Activated B cell treated with CpG ODN at 0.5 μM for 24 hours (primary cell): ENCODE measurements at regions of chr17 and their contacts with region 1.

Region 1: DNA sequence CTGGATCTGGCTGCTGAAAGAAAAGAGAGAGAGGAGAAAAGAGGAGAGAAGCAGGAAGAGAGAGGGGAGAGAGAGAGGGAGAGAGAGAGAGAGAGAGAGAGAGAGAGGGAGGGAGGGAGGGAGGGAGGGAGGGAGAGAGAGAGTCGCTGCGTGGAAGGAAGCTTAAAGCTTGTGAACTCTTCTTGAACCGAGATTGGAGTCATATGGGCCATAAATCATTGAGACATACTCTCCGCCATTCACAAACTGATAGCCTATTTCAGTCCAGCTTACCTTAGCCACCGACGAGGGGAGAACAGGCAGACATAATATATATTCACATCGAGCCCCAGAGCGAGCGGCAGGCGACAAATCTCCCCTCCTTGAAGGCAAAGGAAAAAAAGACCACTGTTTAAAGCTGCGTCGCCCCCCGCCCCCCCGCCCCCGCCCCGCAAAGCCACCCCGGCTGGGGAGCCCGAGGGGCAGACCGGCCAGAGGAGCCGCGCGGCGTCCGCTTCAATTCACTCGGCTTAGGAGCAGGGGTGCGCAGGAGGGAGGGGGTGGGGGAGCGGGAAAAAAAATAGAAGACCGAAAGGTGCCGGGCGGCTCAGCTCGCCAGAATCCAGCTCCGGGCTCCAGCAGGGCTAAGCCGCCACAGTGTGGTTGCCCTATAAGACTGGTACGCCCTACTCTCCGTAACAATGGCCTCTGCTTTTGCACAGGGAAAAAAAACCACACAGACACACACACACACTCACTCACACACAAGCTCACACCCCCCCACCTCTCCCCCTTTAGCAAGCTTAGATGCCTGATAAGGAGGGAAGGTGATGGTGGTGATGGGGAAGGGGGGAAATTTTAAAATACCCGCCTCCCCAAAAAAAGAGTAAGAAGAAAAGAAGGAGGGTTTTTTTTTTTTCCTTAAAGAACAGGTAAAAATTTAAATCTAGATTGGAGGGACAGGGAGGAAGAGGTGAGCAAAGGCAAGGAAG is 10.6 kb upstream of the HOXB2 start:
- DNase-seq: no peak
- ATAC-seq: peak; percentile 21
- H3K4me3 Mint-ChIP-seq: peak overlapping the region; percentile 53
- H3K27ac Mint-ChIP-seq: no peak overlapping the region
- H3K4me1 Mint-ChIP-seq: peaks cover 4% of the 10 kb centered on the region
- H3K27me3 Mint-ChIP-seq: peaks cover 32% of the 10 kb centered on the region
- CTCF ChIP-seq: no peak

Region 2: GRCh38 chr17:48522031-48522653 is 33.4 kb before region 1 on chr17:
- CTCF ChIA-PET with region 1: no interaction called
- POLR2A ChIA-PET with region 1: no interaction called
- intact Hi-C with region 1: loop called (anchors 5 kb)
- DNase-seq: no peak
- ATAC-seq: no peak
- H3K4me3 Mint-ChIP-seq: no peak overlapping the region
- H3K27ac Mint-ChIP-seq: no peak overlapping the region
- H3K4me1 Mint-ChIP-seq: peaks cover 7% of the 10 kb centered on the region
- H3K27me3 Mint-ChIP-seq: peaks cover 52% of the 10 kb centered on the region
- CTCF ChIP-seq: no peak

Region 3: DNA sequence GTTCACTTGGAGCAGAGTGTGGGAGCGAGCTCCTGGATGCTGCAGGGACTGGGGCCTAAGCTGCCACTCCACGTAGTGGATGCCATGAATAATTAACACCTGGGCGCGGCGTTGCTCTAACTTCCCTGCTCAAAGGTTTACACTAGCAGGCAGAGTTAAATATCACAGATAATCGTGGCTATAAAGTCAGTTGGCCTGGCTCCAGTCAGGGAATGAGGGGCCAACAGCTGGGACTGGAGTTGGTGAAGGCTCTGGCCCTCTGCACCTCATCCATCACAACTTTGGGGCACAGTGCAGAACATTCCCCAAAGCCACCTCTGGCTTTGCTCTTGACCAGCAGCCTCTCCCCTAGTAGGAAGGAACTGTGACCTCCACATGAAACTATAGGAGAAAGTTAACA is 11.7 kb after region 1 on chr17:
- CTCF ChIA-PET with region 1: no interaction called
- POLR2A ChIA-PET with region 1: no interaction called
- intact Hi-C with region 1: loop called (anchors 2 kb)
- DNase-seq: no peak
- ATAC-seq: no peak
- H3K4me3 Mint-ChIP-seq: no peak overlapping the region
- H3K27ac Mint-ChIP-seq: no peak overlapping the region
- H3K4me1 Mint-ChIP-seq: peaks cover 4% of the 10 kb centered on the region
- H3K27me3 Mint-ChIP-seq: peaks cover 26% of the 10 kb centered on the region
- CTCF ChIP-seq: no peak

Region 4: DNA sequence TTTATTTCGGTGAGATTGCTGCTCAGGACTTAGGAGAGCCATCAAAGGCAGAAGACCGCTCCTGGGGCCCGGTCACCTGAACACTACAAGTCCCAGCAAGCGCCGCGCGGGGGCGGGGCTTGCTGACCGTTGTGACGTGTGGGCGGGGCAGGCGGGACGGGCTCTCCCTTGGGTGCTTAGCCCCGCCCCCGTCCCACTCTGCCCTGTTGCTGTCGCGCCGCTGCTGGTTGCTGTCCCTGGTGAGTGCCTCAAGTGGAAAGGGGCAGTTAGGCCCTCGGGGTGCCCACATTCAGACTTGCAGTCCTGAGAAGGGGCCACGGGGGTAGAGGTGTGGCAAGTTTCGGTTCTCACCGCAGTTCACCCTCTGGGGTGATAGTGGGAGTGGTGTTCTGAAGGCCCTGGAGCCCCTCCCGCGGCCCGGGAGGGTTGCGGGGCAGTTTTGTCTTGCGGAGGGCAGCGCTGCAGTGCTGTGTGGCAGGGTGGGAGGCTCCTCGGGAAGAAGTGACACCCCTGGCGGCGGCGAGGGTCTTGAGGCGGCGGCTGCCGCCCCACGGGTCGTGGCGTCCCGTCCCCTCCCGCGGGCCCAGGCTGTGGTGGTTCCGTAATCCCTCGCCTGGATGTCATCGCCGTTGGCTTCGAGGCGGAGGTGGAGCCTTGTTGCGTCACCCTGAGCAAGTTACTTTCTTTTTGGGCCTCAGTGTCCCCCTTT is 275.5 kb after region 1 on chr17 and contains the start of gene CALCOCO2:
- CTCF ChIA-PET with region 1: no interaction called
- POLR2A ChIA-PET with region 1: no interaction called
- intact Hi-C with region 1: no loop called
- DNase-seq: peak; percentile 82
- ATAC-seq: peak; percentile 96
- H3K4me3 Mint-ChIP-seq: peak within 1 kb of the TSS; percentile 99
- H3K27ac Mint-ChIP-seq: peak within 1 kb of the TSS; percentile 99
- H3K4me1 Mint-ChIP-seq: peaks cover 42% of the 10 kb centered on the region
- H3K27me3 Mint-ChIP-seq: no peaks in the 10 kb centered on the region
- CTCF ChIP-seq: no peak
- total RNA-seq, gene CALCOCO2: 115 TPM in 2 replicates